CD14-positive monocyte (primary cell): ENCODE measurements at regions of chr1 and their contacts with region 1.

Region 1: DNA sequence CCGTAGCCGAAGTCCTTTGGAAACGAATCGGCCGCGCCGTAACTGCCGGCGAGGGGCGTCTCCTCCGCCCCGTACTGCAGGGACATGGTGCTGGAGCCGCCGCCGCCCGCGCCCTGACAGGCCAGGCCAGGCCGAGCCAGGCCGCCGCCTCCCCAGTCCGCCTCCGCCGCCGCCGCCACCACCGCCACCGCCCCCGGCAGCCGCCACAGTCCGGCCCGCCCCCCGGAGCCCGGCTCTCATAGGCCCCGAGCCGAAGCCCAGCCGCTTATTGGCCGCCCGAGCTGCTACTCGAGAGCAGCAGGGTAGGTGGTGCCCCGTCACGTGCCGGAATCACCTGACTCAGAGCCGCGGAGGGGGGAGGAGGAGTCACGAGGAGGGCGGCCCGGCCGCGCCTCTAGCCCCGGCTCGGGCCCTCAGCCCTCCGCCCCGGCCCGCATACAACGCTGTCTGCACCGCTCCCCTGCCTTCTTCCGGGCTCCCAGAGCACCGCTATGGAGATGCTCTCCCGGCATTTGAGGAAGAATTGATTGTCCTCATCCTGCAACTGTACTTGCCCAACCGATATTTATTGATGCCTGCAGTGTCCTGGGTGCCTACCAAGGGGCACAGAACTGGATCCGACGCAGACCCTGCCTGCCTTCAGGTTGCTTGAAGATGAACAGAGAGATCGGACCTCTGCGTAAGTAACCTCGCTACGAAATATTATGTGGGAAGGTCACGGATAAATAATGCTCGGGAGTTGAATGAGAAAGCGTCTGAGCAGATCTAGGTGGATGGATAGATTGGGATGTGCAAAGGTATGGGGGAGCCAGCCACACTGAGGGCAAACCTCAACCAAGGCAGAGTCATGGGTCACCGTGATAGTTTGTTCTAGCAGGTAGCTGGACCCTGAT is at the start of gene RRAGC:
- DNase-seq: peak; percentile 97 to 98 (median 98)
- H3K4me3 ChIP-seq: peak within 1 kb of the TSS; percentile 70 to 99 (median 93)
- H3K4me3 Mint-ChIP-seq: peak within 1 kb of the TSS; percentile 91 to 99
- H3K27ac ChIP-seq: peak within 1 kb of the TSS; percentile 57 to 90
- H3K27ac Mint-ChIP-seq: peak within 1 kb of the TSS; percentile 89 to 97 (median 93)
- H3K4me1 ChIP-seq: peaks cover 24 to 33% of the 10 kb centered on the region in 2 donors
- H3K4me1 Mint-ChIP-seq: peaks cover 42% of the 10 kb centered on the region
- H3K27me3 ChIP-seq: no peaks in the 10 kb centered on the region
- H3K27me3 Mint-ChIP-seq: no peaks in the 10 kb centered on the region
- CTCF ChIP-seq: no peak
- polyA plus RNA-seq, gene RRAGC: 6.6 to 10.4 (median 8.0) TPM

Region 2: DNA sequence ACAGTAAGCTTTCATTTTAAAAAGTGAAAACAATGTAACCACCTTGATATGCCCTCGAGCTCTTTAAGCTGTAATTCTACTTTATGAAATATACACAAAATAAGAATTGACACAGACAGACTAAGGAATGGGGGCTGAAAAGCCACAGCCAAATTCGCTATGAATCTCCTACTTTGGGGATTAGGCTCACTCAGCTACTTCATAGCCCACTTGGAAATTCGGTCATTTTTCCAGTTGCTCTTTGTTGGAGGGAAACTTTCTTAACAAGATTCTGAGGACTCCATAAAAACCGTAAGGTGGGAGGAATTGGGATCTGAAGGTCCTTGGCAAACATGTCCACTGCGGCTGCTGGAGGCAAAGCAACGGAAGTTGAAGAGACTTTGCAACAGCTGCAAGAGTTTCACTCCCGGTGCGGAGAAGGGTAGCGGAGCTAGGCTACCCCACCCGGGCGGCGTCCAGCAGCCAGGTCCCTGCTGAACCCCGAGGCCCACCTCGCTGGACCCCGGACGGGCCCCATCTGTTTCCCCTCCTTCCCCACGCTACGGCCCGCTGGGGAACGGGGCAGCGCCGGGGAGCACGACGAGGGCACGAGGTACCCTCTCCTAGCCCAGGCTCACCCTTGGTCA is 12.7 kb after region 1 on chr1:
- intact Hi-C with region 1: loop called in 1 of 2 experiments (anchors 1 kb)
- DNase-seq: peak in 2 of 3 donors; percentile 7 to 28
- H3K4me3 ChIP-seq: peak overlapping the region; percentile 74 to 91 (median 82)
- H3K4me3 Mint-ChIP-seq: peak overlapping the region; percentile 91 to 92
- H3K27ac ChIP-seq: peak overlapping the region in 1 of 2 donors; percentile 71
- H3K27ac Mint-ChIP-seq: peak overlapping the region; percentile 50 to 85 (median 76)
- H3K4me1 ChIP-seq: peaks cover 27 to 36% of the 10 kb centered on the region in 2 donors
- H3K4me1 Mint-ChIP-seq: peaks cover 29% of the 10 kb centered on the region
- H3K27me3 ChIP-seq: no peaks in the 10 kb centered on the region
- H3K27me3 Mint-ChIP-seq: peaks cover 0 to 2% (median 2%) of the 10 kb centered on the region in 3 donors
- CTCF ChIP-seq: no peak

Region 3: DNA sequence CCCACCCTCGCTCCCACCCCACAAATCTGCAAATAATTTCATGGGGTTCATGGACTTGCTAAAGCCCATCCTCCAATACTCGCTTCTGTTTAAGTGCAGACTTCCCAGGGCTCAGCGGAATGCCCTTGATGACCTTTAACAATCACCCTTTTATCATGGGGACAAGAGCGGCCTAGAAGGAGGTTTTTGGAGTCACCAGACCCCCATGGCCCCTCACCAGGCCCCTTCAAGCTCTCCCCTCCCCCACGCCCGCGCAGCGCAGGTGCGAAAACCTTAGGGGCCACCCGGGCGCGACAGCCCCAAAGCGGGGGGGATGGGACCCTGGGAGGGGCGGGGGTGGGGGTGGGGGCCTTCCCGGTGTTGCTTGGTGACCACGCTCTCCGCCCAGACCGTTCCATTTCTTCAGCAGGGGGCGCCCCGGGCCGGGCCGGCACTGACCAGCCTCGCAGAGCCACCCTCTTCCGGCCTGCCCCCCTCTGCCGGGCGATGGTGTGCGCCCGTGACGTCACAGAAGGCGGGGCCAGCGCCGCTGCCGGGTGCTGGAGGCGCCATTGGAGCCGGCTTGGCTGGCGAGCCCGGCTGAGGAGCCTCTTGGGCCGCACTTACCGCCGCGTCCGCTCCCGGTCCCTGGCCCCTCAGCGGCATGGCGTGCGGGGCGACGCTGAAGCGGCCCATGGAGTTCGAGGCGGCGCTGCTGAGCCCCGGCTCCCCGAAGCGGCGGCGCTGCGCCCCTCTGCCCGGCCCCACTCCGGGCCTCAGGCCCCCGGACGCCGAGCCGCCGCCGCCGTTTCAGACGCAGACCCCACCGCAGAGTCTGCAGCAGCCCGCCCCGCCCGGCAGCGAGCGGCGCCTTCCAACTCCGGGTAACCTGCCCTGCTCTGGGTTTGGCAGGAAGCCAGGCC is 131.2 kb after region 1 on chr1 and contains the start of gene AKIRIN1:
- intact Hi-C with region 1: loop called in 1 of 2 experiments (anchors 2 kb)
- DNase-seq: peak; percentile 93 to 98 (median 96)
- H3K4me3 ChIP-seq: peak within 1 kb of the TSS; percentile 83 to 99 (median 91)
- H3K4me3 Mint-ChIP-seq: peak within 1 kb of the TSS; percentile 82 to 93
- H3K27ac ChIP-seq: peak within 1 kb of the TSS; percentile 58 to 90
- H3K27ac Mint-ChIP-seq: peak within 1 kb of the TSS; percentile 74 to 90 (median 88)
- H3K4me1 ChIP-seq: peaks cover 17 to 22% of the 10 kb centered on the region in 2 donors
- H3K4me1 Mint-ChIP-seq: peaks cover 25% of the 10 kb centered on the region
- H3K27me3 ChIP-seq: no peaks in the 10 kb centered on the region
- H3K27me3 Mint-ChIP-seq: no peaks in the 10 kb centered on the region
- CTCF ChIP-seq: peak; percentile 11
- polyA plus RNA-seq, gene AKIRIN1: 41.8 to 61.0 (median 60.8) TPM